HepG2 (cell line): ENCODE measurements at regions of chr18 and their contacts with region 1.

Region 1: GRCh38 chr18:24176727-24177416 is 38.0 kb downstream of the CABYR start:
- DNase-seq: peak; percentile 37
- ATAC-seq: peak; percentile 78
- H3K4me3 ChIP-seq: no peak overlapping the region
- H3K27ac ChIP-seq: no peak overlapping the region
- H3K4me1 ChIP-seq: no peaks in the 10 kb centered on the region
- H3K27me3 ChIP-seq: peaks cover 1 to 4% of the 10 kb centered on the region in 2 experiments; a peak in 2 of 5 replicates
- CTCF ChIP-seq: peak; percentile 70
- EP300 ChIP-seq: no peak
- POLR2A ChIP-seq: no peak
- RAD21 ChIP-seq: peak; percentile 30; the same call in 1 of the 2 replicates

Region 2: DNA sequence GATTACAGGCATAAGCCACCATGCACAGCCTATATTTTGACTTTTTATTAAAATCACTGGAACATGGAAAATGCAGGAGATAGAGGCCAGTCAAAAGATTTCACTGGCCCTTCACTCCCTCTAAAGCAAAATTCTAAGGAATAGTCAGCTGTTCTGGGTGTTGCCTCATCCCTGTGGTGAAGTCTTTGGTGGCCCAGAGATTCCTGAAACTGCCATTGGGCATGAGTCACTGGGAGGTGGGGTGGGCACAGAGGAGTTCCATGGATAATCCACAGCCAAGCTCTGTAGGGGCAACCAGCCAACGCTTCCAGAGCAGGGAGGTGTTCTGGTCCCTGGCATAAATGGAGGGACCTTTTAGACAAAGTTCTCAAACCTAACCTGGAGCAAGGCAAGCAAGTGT is 252.1 kb before region 1 on chr18:
- CTCF ChIA-PET with region 1: no interaction called
- POLR2A ChIA-PET with region 1: no interaction called
- in situ Hi-C with region 1: no loop called
- intact Hi-C with region 1: no loop called
- DNase-seq: no peak
- ATAC-seq: no peak
- H3K4me3 ChIP-seq: no peak overlapping the region
- H3K27ac ChIP-seq: no peak overlapping the region
- H3K4me1 ChIP-seq: peaks cover 11% of the 10 kb centered on the region
- H3K27me3 ChIP-seq: no peaks in the 10 kb centered on the region
- CTCF ChIP-seq: no peak
- EP300 ChIP-seq: no peak
- POLR2A ChIP-seq: no peak
- RAD21 ChIP-seq: no peak

Region 3: DNA sequence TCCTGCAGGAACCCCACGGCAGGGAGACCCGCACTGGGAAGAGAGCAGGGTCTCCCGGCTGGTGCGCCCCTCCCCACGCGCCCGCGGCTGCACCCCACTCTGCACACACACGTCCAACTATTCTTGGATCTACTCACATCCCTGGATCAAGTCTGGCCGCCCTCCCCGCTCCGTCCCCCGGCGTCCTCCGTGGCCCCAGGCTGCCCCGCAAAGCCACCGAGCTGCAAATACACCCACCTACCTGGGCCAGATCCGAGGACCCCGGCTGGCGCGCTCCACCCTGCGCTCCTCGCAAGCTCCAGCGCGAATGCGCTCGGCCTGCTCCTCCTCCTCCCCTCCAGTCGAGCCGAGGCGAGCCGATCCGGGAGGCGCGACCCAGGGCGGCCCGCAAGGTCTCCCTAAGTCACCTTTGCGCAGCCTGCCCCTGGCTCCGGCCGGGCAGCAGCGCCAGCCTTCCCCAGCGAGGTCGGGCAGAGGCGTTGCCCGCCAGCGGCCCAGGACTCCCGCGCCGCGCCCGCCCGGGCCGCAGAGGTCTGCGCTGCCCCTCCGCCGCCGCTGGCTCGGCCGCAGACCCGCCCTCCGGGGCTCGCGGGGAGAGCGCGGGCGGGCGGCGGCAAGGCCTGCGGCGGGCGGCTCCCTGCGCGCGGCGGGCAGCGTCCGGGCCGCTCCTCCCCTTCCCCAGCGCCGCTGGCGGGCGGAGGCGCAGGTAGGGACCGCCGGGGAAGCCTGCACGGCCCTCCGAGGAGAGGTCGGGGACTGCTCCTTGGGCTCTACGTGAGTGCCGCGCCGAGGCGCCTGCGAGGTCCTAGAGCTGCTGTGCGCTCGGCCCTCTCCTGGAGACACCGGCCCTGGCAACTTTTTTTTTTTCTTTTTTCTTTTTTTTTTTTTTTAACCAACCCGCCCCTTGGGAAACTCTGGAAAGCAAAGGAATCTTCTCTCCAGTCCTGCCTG is 94.8 kb after region 1 on chr18:
- CTCF ChIA-PET with region 1: no interaction called
- POLR2A ChIA-PET with region 1: no interaction called
- in situ Hi-C with region 1: no loop called
- intact Hi-C with region 1: loop called (anchors 10 kb)
- DNase-seq: peak; percentile 4
- ATAC-seq: peak; percentile 96
- H3K4me3 ChIP-seq: peak overlapping the region; percentile 30 to 65 (median 46); a peak in 5 of 6 replicates
- H3K27ac ChIP-seq: no peak overlapping the region
- H3K4me1 ChIP-seq: peaks cover 9% of the 10 kb centered on the region; the same call in 1 of the 2 replicates
- H3K27me3 ChIP-seq: peaks cover 3 to 28% of the 10 kb centered on the region in 2 experiments
- CTCF ChIP-seq: no peak
- EP300 ChIP-seq: no peak
- POLR2A ChIP-seq: no peak
- RAD21 ChIP-seq: no peak